Endothelial cell of umbilical vein (primary cell): ENCODE measurements at regions of chr2 and their contacts with region 1.

Region 1: DNA sequence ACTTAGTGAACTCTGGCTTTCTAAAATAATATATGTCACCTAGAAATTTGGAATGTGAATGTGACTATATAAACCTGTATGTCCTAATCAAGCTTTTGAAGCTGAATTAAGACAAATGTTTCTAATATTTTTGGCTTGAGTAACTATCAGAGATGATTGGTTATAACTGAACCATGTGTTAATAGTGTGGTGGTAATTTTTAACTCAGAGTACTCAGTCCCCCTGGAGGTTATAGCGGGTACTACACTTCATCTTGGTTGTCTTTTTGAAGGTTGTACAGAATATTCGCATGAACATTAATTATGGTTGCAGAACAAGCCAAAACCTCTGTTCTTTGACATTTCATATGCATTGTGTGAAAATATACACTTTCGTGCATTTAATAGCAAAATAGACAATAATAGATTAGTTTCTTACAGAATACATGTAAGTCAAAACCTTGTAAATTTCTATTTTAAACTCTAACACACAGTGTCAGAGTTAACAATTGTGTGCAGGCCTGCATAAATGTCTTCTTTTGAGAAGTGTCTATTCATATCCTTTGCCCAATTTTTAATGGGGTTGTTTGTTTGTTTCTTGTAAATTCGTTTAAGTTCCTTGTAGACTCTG is 86.0 kb downstream of the OSBPL6 start:
- DNase-seq: peak; percentile 71
- H3K4me3 ChIP-seq: no peak overlapping the region
- H3K27ac ChIP-seq: no peak overlapping the region
- H3K4me1 ChIP-seq: peaks cover 22% of the 10 kb centered on the region
- H3K27me3 ChIP-seq: peaks cover 0 to 4% of the 10 kb centered on the region in 2 experiments
- CTCF ChIP-seq: peak; percentile 48 to 49
- POLR2A ChIP-seq: no peak

Region 2: GRCh38 chr2:178128836-178129630 is 151.3 kb before region 1 on chr2:
- CTCF ChIA-PET with region 1: interaction called, 24 read pairs
- POLR2A ChIA-PET with region 1: no interaction called
- dilution Hi-C with region 1: no loop called
- intact Hi-C with region 1: loop called (anchors 1 kb)
- DNase-seq: no peak
- H3K4me3 ChIP-seq: no peak overlapping the region
- H3K27ac ChIP-seq: no peak overlapping the region
- H3K4me1 ChIP-seq: no peaks in the 10 kb centered on the region
- H3K27me3 ChIP-seq: no peaks in the 10 kb centered on the region
- CTCF ChIP-seq: no peak
- POLR2A ChIP-seq: no peak

Region 3: GRCh38 chr2:178193823-178194599 is 86.3 kb before region 1 on chr2 and contains the start of gene OSBPL6:
- CTCF ChIA-PET with region 1: interaction called, 6 read pairs
- POLR2A ChIA-PET with region 1: no interaction called
- dilution Hi-C with region 1: no loop called
- intact Hi-C with region 1: loop called (anchors 1 kb)
- DNase-seq: peak; percentile 88
- H3K4me3 ChIP-seq: peak within 1 kb of the TSS; percentile 48 to 79 (median 73)
- H3K27ac ChIP-seq: no peak within 1 kb of the TSS
- H3K4me1 ChIP-seq: peaks cover 8% of the 10 kb centered on the region
- H3K27me3 ChIP-seq: peaks cover 11% of the 10 kb centered on the region in 2 experiments
- CTCF ChIP-seq: peak in 1 of 2 donors; percentile 22
- POLR2A ChIP-seq: peak; percentile 51
- total RNA-seq, gene OSBPL6: 2.3 TPM in 2 replicates

Region 4: GRCh38 chr2:178241844-178242551 is 38.4 kb before region 1 on chr2:
- CTCF ChIA-PET with region 1: no interaction called
- POLR2A ChIA-PET with region 1: no interaction called
- dilution Hi-C with region 1: no loop called
- intact Hi-C with region 1: loop called (anchors 2 kb)
- DNase-seq: peak; percentile 93
- H3K4me3 ChIP-seq: no peak overlapping the region
- H3K27ac ChIP-seq: peak overlapping the region; percentile 1
- H3K4me1 ChIP-seq: peaks cover 6% of the 10 kb centered on the region
- H3K27me3 ChIP-seq: no peaks in the 10 kb centered on the region
- CTCF ChIP-seq: no peak
- POLR2A ChIP-seq: no peak

Region 5: GRCh38 chr2:178298785-178299212 is 18.5 kb after region 1 on chr2:
- CTCF ChIA-PET with region 1: interaction called, 8 read pairs
- POLR2A ChIA-PET with region 1: interaction called, 7 read pairs
- dilution Hi-C with region 1: no loop called
- intact Hi-C with region 1: loop called (anchors 1 kb)
- DNase-seq: peak; percentile 93
- H3K4me3 ChIP-seq: no peak overlapping the region
- H3K27ac ChIP-seq: peak overlapping the region; percentile 37
- H3K4me1 ChIP-seq: peaks cover 29% of the 10 kb centered on the region
- H3K27me3 ChIP-seq: no peaks in the 10 kb centered on the region
- CTCF ChIP-seq: no peak
- POLR2A ChIP-seq: no peak

Region 6: DNA sequence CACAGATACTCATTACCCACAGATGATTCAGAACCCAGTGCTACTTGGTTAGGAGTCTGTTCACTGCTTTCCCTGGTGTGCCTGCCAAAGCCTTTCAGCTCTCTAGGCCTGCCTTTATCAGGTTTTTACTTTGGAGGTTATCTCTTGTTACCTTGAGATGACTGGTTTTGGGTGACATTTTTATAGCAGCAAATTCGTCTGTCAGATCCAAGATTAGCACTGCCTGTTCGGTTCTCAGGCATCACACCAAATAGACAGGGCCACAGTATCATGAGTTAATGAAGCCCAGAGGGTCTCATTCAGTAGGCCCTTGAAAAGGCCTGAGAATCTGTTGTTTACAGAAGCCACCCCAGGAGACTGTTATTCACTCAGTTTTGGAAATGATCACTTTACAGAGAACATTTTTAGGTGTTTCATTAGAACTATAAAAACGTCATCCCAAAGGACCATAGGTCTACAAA is 35.2 kb after region 1 on chr2:
- CTCF ChIA-PET with region 1: no interaction called
- POLR2A ChIA-PET with region 1: no interaction called
- dilution Hi-C with region 1: no loop called
- intact Hi-C with region 1: no loop called
- DNase-seq: no peak
- H3K4me3 ChIP-seq: no peak overlapping the region
- H3K27ac ChIP-seq: no peak overlapping the region
- H3K4me1 ChIP-seq: no peaks in the 10 kb centered on the region
- H3K27me3 ChIP-seq: no peaks in the 10 kb centered on the region
- CTCF ChIP-seq: no peak
- POLR2A ChIP-seq: no peak

Region 7: DNA sequence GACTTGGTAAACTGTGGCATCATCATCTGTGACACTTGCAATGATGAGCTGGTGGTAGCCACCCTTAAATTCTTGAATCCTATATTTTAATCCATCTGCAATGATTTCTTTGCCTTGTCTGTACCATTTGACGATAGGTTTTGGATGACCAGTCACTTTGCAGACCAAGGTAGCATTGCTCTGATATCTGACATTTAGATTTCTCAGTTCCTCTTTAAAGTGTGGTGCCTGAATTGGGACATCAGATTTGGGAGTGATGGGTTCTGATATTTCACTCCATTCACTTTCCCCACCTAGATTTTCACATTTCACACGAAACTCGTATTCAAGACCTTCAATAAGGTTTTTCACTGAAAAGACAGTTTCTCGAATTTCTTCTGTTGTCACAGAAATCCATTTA is 255.7 kb after region 1 on chr2:
- CTCF ChIA-PET with region 1: no interaction called
- POLR2A ChIA-PET with region 1: no interaction called
- dilution Hi-C with region 1: no loop called
- intact Hi-C with region 1: no loop called
- DNase-seq: no peak
- H3K4me3 ChIP-seq: no peak overlapping the region
- H3K27ac ChIP-seq: no peak overlapping the region
- H3K4me1 ChIP-seq: peaks cover 10% of the 10 kb centered on the region
- H3K27me3 ChIP-seq: no peaks in the 10 kb centered on the region
- CTCF ChIP-seq: no peak
- POLR2A ChIP-seq: no peak